ENCODE measurements at regions of chr7 and their contacts with region 1.

Region 1: DNA sequence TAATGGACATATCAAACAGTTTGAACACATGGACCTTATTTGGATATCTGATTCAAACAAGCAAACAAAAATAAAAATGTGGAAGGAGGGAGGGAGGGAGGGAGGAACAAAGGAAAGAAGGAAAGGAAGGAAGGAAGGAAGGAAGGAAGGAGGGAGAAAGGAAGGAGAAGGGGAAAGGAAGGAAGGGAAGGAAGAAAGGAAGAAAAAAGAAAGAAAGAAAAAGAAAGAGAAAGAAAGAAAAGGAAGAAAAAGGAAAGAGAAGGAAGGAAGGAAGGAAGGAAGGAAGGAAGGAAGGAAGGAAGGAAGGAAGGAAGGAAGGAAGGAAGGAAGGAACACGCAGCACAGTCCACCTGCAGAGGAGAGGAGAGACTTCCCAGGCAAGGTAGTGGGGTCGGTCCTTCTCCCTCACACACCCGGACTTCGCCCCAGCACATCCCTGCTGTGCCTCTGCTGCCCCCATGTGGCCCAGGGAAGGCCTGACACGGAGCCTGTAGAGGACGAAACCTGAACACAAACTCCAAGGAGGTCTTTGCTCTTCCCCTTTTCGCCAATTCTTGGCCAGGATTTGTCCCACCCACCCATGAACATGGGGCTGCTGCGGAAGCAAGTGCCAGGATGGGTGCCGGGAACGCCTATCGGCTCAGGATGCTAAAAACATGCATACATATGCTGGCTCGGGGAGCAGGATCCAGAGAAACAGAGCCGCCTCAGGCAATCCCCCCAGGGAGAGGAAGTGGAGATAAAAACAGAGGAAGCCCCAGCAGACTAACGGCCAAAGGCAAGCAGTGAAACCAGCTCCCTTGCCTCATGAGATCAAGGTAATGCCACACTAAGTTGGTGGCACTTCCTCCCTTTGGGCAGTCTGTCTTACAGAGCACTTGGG is 52.3 kb upstream of the DGKI start:
- DNase-seq: peak; percentile 46 to 81 (median 68)
- ATAC-seq: peak; percentile 92
- H3K4me3 ChIP-seq: no peak overlapping the region
- H3K4me3 Mint-ChIP-seq: peak overlapping the region; percentile 51 to 82 (median 66)
- H3K27ac ChIP-seq: no peak overlapping the region
- H3K27ac Mint-ChIP-seq: peak overlapping the region in 8 of 9 donors; percentile 19 to 72 (median 62)
- H3K4me1 ChIP-seq: peaks cover 0 to 6% of the 10 kb centered on the region in 2 donors
- H3K4me1 Mint-ChIP-seq: peaks cover 10 to 36% (median 16%) of the 10 kb centered on the region in 7 donors
- H3K27me3 ChIP-seq: no peaks in the 10 kb centered on the region
- H3K27me3 Mint-ChIP-seq: no peaks in the 10 kb centered on the region

Region 2: GRCh38 chr7:137656227-137656849 is 242.7 kb before region 1 on chr7:
- CTCF ChIA-PET with region 1: interaction called, 3 read pairs
- POLR2A ChIA-PET with region 1: no interaction called
- intact Hi-C with region 1: loop called in 1 of 2 experiments (anchors 1 kb)
- DNase-seq: peak in 8 of 9 donors; percentile 7 to 64 (median 33)
- ATAC-seq: peak; percentile 46
- H3K4me3 ChIP-seq: no peak overlapping the region
- H3K4me3 Mint-ChIP-seq: no peak overlapping the region
- H3K27ac ChIP-seq: no peak overlapping the region
- H3K27ac Mint-ChIP-seq: no peak overlapping the region
- H3K4me1 ChIP-seq: no peaks in the 10 kb centered on the region
- H3K4me1 Mint-ChIP-seq: peaks cover 0 to 4% (median 0%) of the 10 kb centered on the region in 7 donors
- H3K27me3 ChIP-seq: no peaks in the 10 kb centered on the region
- H3K27me3 Mint-ChIP-seq: peaks cover 0 to 11% (median 5%) of the 10 kb centered on the region in 5 donors

Region 3: GRCh38 chr7:138002096-138002827 is 103.2 kb after region 1 on chr7:
- CTCF ChIA-PET with region 1: interaction called, 198 read pairs
- POLR2A ChIA-PET with region 1: interaction called, 4 read pairs
- intact Hi-C with region 1: loop called in 1 of 2 experiments (anchors 1 kb)
- DNase-seq: peak; percentile 95 to 98 (median 97)
- ATAC-seq: peak; percentile 95
- H3K4me3 ChIP-seq: peak overlapping the region; percentile 99
- H3K4me3 Mint-ChIP-seq: peak overlapping the region; percentile 89 to 96 (median 94)
- H3K27ac ChIP-seq: peak overlapping the region; percentile 79
- H3K27ac Mint-ChIP-seq: peak overlapping the region; percentile 67 to 95 (median 89)
- H3K4me1 ChIP-seq: peaks cover 6 to 14% of the 10 kb centered on the region in 2 donors
- H3K4me1 Mint-ChIP-seq: peaks cover 9 to 54% (median 45%) of the 10 kb centered on the region in 7 donors
- H3K27me3 ChIP-seq: no peaks in the 10 kb centered on the region
- H3K27me3 Mint-ChIP-seq: no peaks in the 10 kb centered on the region

Region 4: DNA sequence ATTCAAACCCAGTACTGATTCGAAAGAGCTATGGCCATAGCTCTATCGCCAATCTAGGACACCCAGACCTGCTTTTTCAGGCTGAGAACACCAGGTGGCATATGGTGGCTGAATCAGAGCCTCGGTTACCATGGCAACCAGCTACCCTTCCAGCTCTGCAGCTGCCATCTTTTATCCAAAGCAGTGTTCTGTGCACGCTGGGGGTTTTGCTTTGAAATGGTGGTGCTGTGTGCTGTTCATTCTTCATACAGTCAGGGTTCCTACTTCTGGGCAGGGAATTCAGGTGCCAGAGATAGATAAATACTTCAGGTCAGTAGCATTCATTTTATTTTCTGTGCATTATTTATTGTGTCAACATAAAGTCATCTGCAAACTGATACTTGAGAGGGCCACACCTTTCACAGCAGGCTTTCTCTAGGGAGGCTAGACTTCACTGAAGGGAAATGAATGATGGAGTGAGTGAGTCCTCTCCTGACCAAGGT is 262.6 kb after region 1 on chr7:
- CTCF ChIA-PET with region 1: no interaction called
- POLR2A ChIA-PET with region 1: no interaction called
- intact Hi-C with region 1: loop called in 1 of 2 experiments (anchors 5 kb)
- DNase-seq: peak; percentile 24 to 87 (median 79)
- ATAC-seq: peak; percentile 99
- H3K4me3 ChIP-seq: no peak overlapping the region
- H3K4me3 Mint-ChIP-seq: no peak overlapping the region
- H3K27ac ChIP-seq: no peak overlapping the region
- H3K27ac Mint-ChIP-seq: no peak overlapping the region
- H3K4me1 ChIP-seq: no peaks in the 10 kb centered on the region
- H3K4me1 Mint-ChIP-seq: no peaks in the 10 kb centered on the region
- H3K27me3 ChIP-seq: no peaks in the 10 kb centered on the region
- H3K27me3 Mint-ChIP-seq: peaks cover 0 to 7% (median 0%) of the 10 kb centered on the region in 5 donors